Naive thymus-derived CD4-positive, alpha-beta T cell (primary cell): ENCODE measurements at regions of chr11 and their contacts with region 1.

Region 1: GRCh38 chr11:1652771-1653540 is 23.4 kb downstream of the KRTAP5-5 start:
- DNase-seq: peak; percentile 54 to 87 (median 78)
- ATAC-seq: peak; percentile 93
- H3K4me3 ChIP-seq: no peak overlapping the region
- H3K4me3 Mint-ChIP-seq: no peak overlapping the region
- H3K27ac ChIP-seq: no peak overlapping the region
- H3K27ac Mint-ChIP-seq: no peak overlapping the region
- H3K4me1 ChIP-seq: no peaks in the 10 kb centered on the region
- H3K4me1 Mint-ChIP-seq: peaks cover 0 to 4% (median 0%) of the 10 kb centered on the region in 7 donors
- H3K27me3 ChIP-seq: no peaks in the 10 kb centered on the region
- H3K27me3 Mint-ChIP-seq: peaks cover 0 to 19% (median 16%) of the 10 kb centered on the region in 5 donors

Region 2: DNA sequence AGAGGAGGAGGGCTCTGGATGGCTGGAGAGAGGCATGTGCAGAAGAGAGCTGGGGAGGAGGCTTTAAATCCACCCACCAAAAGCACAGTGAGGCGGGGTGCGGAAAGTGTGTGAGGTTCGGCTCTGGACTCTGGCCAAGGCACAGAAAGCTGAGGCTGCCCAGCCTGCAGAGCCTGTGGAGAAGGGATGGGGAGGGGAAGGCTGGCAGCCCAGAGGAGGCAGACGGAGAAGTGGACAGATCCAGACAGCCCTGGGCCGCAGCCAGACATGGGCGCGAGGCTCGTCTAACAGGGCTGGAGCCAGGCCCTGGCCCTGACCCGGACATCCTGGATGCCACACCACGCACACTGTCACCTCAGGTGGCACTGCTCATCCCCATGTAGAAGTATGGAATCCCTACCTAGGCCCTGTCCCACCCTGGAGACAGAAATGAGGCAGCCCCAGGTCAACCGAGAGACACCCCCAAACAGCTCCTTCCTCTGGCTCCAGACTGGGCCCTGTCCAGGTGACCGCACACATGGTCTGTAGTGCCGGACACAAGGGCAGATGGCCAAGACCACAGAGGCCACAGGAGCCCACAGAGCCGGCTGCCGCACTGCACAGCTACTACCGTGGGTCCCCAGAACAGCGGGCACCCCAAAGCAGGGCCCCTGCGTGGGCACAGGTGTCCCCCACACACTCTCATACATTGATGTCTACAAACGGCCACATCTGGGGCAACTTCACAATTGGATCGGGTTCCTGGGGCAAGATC is 149.8 kb before region 1 on chr11:
- CTCF ChIA-PET with region 1: no interaction called
- POLR2A ChIA-PET with region 1: no interaction called
- intact Hi-C with region 1: no loop called
- DNase-seq: no peak
- ATAC-seq: no peak
- H3K4me3 ChIP-seq: no peak overlapping the region
- H3K4me3 Mint-ChIP-seq: no peak overlapping the region
- H3K27ac ChIP-seq: no peak overlapping the region
- H3K27ac Mint-ChIP-seq: peak overlapping the region in 1 of 9 donors; percentile 48
- H3K4me1 ChIP-seq: peaks cover 0 to 5% of the 10 kb centered on the region in 2 donors
- H3K4me1 Mint-ChIP-seq: peaks cover 10 to 73% (median 41%) of the 10 kb centered on the region in 7 donors
- H3K27me3 ChIP-seq: no peaks in the 10 kb centered on the region
- H3K27me3 Mint-ChIP-seq: no peaks in the 10 kb centered on the region

Region 3: DNA sequence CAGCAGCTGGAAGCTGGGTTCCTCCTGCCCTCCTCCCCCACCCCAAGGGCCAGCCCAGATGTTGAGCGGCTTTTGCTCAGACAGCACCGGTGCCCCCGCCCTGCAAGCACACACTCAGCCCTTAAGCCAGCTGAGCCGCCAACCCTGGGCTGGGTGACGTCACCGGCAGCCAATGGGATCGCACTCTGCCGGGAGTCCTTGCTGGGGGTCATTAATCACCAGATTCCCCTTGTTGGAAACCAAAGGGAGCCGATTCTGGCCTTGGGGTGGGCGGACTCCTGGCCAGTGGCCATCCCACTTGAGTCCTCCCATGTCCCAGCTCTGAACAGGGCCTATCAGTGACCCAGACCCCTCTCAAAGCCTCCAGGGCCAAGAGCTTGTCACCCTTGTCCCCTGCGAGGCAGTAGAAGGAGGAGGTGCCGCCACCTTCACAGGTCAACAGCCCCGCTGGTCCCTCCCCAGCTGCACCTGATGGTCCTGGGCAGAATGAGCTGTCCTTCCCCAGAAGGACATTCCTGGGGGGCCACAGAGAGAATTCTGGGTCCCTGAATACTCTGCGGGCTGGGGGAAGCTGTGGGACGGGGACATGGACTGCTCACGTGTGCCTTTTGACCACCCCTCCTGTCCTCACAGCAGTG is 88.3 kb before region 1 on chr11:
- CTCF ChIA-PET with region 1: no interaction called
- POLR2A ChIA-PET with region 1: no interaction called
- intact Hi-C with region 1: no loop called
- DNase-seq: no peak
- ATAC-seq: peak; percentile 6
- H3K4me3 ChIP-seq: no peak overlapping the region
- H3K4me3 Mint-ChIP-seq: no peak overlapping the region
- H3K27ac ChIP-seq: no peak overlapping the region
- H3K27ac Mint-ChIP-seq: peak overlapping the region in 1 of 9 donors; percentile 48
- H3K4me1 ChIP-seq: peaks cover 0 to 13% of the 10 kb centered on the region in 2 donors
- H3K4me1 Mint-ChIP-seq: peaks cover 0 to 10% (median 5%) of the 10 kb centered on the region in 7 donors
- H3K27me3 ChIP-seq: no peaks in the 10 kb centered on the region
- H3K27me3 Mint-ChIP-seq: peaks cover 0 to 2% (median 0%) of the 10 kb centered on the region in 5 donors

Region 4: DNA sequence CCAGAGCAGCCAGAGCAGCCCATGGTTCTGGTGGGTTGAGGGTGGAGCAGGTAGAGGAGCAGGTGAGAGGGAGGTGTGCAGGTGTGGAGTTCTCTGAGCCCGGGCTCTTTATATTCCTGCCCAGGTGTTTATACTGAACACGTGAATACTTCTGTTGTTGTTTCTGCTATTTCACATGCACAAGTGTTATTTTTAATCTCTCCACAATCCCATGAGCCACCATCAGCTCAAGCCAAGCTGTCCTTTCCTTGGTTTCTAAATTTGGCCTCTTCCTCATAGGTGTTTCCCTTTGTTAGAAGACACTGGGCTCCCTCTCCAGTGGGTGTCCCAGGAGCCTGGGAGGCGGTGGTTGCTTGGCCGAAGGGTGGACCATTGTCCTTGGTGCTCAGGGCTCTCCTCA is 44.6 kb before region 1 on chr11 and contains the start of gene KRTAP5-3:
- CTCF ChIA-PET with region 1: no interaction called
- POLR2A ChIA-PET with region 1: no interaction called
- intact Hi-C with region 1: no loop called
- DNase-seq: no peak
- ATAC-seq: no peak
- H3K4me3 ChIP-seq: no peak within 1 kb of the TSS
- H3K4me3 Mint-ChIP-seq: no peak within 1 kb of the TSS
- H3K27ac ChIP-seq: no peak within 1 kb of the TSS
- H3K27ac Mint-ChIP-seq: no peak within 1 kb of the TSS
- H3K4me1 ChIP-seq: no peaks in the 10 kb centered on the region
- H3K4me1 Mint-ChIP-seq: peaks cover 0 to 3% (median 0%) of the 10 kb centered on the region in 7 donors
- H3K27me3 ChIP-seq: peaks cover 0 to 4% of the 10 kb centered on the region in 2 donors
- H3K27me3 Mint-ChIP-seq: peaks cover 14 to 31% (median 26%) of the 10 kb centered on the region in 5 donors
- total RNA-seq, gene KRTAP5-3: not detected

Region 5: GRCh38 chr11:2002807-2003206 is 349.9 kb after region 1 on chr11:
- CTCF ChIA-PET with region 1: interaction called, 11 read pairs
- POLR2A ChIA-PET with region 1: no interaction called
- intact Hi-C with region 1: no loop called
- DNase-seq: no peak
- ATAC-seq: peak; percentile 66
- H3K4me3 ChIP-seq: no peak overlapping the region
- H3K4me3 Mint-ChIP-seq: no peak overlapping the region
- H3K27ac ChIP-seq: no peak overlapping the region
- H3K27ac Mint-ChIP-seq: no peak overlapping the region
- H3K4me1 ChIP-seq: no peaks in the 10 kb centered on the region
- H3K4me1 Mint-ChIP-seq: no peaks in the 10 kb centered on the region
- H3K27me3 ChIP-seq: no peaks in the 10 kb centered on the region
- H3K27me3 Mint-ChIP-seq: no peaks in the 10 kb centered on the region